CD4-positive, alpha-beta memory T cell (primary cell): ENCODE measurements at regions of chr15 and their contacts with region 1.

Region 1: DNA sequence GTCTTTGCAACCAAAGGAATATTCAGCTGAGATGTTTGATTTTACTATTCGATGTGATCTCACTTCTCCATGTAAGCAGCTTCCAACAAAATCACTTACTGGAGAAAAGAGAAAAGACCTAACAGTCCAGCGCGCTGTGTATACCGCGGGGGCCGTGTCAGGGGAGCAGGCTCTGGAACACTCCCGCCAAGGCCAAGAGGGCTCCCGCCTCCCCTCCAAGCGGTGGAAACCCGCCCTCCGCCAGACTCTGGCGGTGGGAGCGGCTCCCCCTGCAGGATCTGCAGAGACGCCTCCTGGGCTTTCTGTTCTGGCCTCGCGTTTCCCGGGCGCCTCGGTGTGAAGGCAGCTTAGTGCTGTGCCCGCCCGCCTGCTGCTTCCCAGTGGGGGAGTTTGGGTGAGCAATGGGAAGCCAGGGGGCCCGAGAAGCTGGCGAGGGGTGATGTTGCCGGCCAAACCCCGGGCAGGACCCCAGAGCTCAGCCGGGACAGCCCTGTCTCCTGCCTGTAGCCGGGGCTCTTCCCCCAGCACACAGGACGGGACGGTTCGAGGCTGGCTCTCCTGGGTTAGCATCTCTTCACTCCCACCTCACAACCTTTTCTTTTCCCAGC is 36.3 kb downstream of the CHST14 start:
- DNase-seq: peak; percentile 44 to 64 (median 47)
- H3K4me3 ChIP-seq: peak overlapping the region in 1 of 2 donors; percentile 22
- H3K4me3 Mint-ChIP-seq: peak overlapping the region in 6 of 8 donors; percentile 12 to 74 (median 54)
- H3K27ac ChIP-seq: no peak overlapping the region
- H3K27ac Mint-ChIP-seq: no peak overlapping the region
- H3K4me1 ChIP-seq: peaks cover 24% of the 10 kb centered on the region
- H3K4me1 Mint-ChIP-seq: peaks cover 9 to 20% (median 14%) of the 10 kb centered on the region in 4 donors
- H3K27me3 ChIP-seq: peaks cover 31% of the 10 kb centered on the region
- H3K27me3 Mint-ChIP-seq: peaks cover 30 to 48% of the 10 kb centered on the region in 2 donors

Region 2: DNA sequence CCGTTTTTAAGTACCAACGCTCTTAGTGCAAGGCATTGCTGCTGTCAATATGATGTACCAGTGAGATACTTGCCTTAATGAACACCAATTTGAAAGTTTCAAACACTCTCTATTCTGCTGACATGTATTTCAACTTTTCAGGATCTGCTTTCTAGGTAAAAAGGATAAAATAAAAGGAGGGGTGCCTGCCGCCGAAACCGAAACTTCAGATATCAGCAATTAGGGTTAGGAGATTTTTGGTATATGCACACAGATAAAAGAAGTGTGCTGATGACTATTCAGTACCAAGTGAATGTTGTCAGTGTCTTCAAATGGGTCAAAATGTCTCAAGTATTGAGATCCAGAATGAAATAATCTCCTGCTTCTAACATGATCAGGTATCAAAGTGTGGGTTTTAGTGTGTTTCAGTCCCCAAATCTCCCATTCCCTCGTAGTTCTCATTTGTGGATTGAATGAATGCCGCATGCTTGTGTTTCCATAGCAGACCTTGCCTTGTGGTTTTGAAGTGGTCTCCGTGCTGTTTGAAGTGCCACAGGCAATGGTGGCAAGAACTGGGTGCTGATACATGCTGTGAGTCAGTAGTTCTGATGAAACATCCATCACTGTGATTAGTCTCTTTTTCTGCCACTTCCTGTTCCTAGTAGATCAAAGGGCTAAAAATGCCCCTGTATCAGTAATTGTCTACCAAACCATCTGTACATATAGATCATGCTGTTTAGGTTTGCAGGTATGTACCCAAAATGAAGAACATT is 13.8 kb before region 1 on chr15:
- CTCF ChIA-PET with region 1: interaction called, 10 read pairs
- POLR2A ChIA-PET with region 1: no interaction called
- intact Hi-C with region 1: loop called (anchors 2 kb)
- DNase-seq: peak; percentile 33 to 80 (median 41)
- H3K4me3 ChIP-seq: peak overlapping the region; percentile 6 to 17
- H3K4me3 Mint-ChIP-seq: peak overlapping the region; percentile 63 to 84 (median 76)
- H3K27ac ChIP-seq: peak overlapping the region; percentile 20
- H3K27ac Mint-ChIP-seq: peak overlapping the region; percentile 11 to 84 (median 65)
- H3K4me1 ChIP-seq: peaks cover 19% of the 10 kb centered on the region
- H3K4me1 Mint-ChIP-seq: peaks cover 14 to 22% (median 19%) of the 10 kb centered on the region in 4 donors
- H3K27me3 ChIP-seq: no peaks in the 10 kb centered on the region
- H3K27me3 Mint-ChIP-seq: no peaks in the 10 kb centered on the region